ENCODE measurements at regions of chr9 and their contacts with region 1.

Region 1: DNA sequence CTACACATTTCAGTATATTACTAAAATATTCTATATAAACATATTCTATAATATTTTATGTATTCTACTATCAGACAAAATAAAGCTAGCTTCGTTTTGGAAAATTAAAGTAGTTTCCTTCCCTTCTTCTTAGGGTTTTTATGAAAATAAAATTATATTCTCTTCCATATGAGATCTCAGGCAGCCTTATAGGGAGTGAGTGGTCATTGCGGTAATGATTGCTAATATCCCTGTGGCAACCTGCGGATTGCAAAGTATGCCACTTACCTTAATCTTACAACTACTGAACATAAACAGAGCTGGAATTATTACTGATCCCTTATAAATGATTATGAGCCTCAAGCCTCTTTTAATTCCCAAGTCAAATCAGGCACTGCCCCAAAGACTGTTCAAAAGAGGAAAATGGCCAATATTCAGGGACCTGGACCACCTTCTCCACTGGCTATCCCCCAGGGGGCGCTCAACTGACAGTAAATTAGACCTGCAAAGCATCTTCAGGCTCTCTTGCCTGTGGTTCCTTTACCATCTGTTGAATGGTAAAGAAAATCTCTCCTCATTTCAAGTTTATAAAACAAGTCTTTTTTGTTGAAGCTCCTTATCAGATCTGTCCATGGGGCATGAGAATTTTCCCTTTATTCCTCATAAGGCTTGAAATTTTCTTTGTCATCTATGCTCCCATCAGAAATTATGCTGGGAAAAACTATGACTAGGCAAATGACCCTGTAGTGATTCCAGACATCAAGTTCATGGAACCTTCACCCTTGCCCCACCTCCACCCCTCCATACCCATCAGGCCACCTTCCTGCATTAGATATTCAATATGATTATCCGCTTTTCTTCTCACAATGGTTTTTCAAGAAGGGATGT is 163.9 kb downstream of the CEMIP2 start:
- DNase-seq: peak; percentile 65
- H3K4me3 Mint-ChIP-seq: no peak overlapping the region
- H3K27ac Mint-ChIP-seq: no peak overlapping the region
- H3K4me1 Mint-ChIP-seq: no peaks in the 10 kb centered on the region
- H3K27me3 Mint-ChIP-seq: peaks cover 9% of the 10 kb centered on the region

Region 2: GRCh38 chr9:71243951-71244350 is 360.5 kb before region 1 on chr9:
- intact Hi-C with region 1: no loop called
- DNase-seq: no peak
- H3K4me3 Mint-ChIP-seq: no peak overlapping the region
- H3K27ac Mint-ChIP-seq: no peak overlapping the region
- H3K4me1 Mint-ChIP-seq: no peaks in the 10 kb centered on the region
- H3K27me3 Mint-ChIP-seq: no peaks in the 10 kb centered on the region

Region 3: GRCh38 chr9:71285191-71285656 is 319.2 kb before region 1 on chr9:
- intact Hi-C with region 1: loop called (anchors 5 kb)
- DNase-seq: peak; percentile 10
- H3K4me3 Mint-ChIP-seq: no peak overlapping the region
- H3K27ac Mint-ChIP-seq: no peak overlapping the region
- H3K4me1 Mint-ChIP-seq: no peaks in the 10 kb centered on the region
- H3K27me3 Mint-ChIP-seq: peaks cover 3% of the 10 kb centered on the region

Region 4: DNA sequence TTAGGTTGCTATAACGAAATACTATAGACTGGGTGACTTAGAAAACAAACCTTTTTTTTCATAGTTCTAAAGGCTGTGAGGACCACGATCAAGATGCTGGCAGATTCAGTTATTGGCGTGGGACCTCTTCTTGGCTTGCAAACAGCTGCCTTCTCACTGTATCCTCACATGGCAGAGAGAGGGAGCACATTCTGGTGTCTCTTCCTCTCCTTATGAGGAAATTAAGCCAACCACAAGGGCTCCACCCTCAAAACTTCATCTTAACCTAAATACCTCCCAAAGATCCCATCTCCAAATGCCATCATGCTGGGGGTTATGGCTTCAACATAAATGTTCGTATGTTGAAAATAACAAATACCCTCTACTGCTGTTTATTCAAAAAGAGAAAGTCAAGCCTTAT is 33.2 kb before region 1 on chr9:
- intact Hi-C with region 1: no loop called
- DNase-seq: no peak
- H3K4me3 Mint-ChIP-seq: no peak overlapping the region
- H3K27ac Mint-ChIP-seq: no peak overlapping the region
- H3K4me1 Mint-ChIP-seq: no peaks in the 10 kb centered on the region
- H3K27me3 Mint-ChIP-seq: peaks cover 15% of the 10 kb centered on the region

Region 5: GRCh38 chr9:71647094-71647591 is 42.7 kb after region 1 on chr9:
- intact Hi-C with region 1: no loop called
- DNase-seq: peak; percentile 21
- H3K4me3 Mint-ChIP-seq: peak overlapping the region; percentile 73
- H3K27ac Mint-ChIP-seq: no peak overlapping the region
- H3K4me1 Mint-ChIP-seq: peaks cover 66% of the 10 kb centered on the region
- H3K27me3 Mint-ChIP-seq: peaks cover 4% of the 10 kb centered on the region

Region 6: GRCh38 chr9:71683598-71684235 is 79.3 kb after region 1 on chr9:
- intact Hi-C with region 1: loop called (anchors 1 kb)
- DNase-seq: no peak
- H3K4me3 Mint-ChIP-seq: peak overlapping the region; percentile 72
- H3K27ac Mint-ChIP-seq: peak overlapping the region; percentile 68
- H3K4me1 Mint-ChIP-seq: peaks cover 60% of the 10 kb centered on the region
- H3K27me3 Mint-ChIP-seq: no peaks in the 10 kb centered on the region

Region 7: DNA sequence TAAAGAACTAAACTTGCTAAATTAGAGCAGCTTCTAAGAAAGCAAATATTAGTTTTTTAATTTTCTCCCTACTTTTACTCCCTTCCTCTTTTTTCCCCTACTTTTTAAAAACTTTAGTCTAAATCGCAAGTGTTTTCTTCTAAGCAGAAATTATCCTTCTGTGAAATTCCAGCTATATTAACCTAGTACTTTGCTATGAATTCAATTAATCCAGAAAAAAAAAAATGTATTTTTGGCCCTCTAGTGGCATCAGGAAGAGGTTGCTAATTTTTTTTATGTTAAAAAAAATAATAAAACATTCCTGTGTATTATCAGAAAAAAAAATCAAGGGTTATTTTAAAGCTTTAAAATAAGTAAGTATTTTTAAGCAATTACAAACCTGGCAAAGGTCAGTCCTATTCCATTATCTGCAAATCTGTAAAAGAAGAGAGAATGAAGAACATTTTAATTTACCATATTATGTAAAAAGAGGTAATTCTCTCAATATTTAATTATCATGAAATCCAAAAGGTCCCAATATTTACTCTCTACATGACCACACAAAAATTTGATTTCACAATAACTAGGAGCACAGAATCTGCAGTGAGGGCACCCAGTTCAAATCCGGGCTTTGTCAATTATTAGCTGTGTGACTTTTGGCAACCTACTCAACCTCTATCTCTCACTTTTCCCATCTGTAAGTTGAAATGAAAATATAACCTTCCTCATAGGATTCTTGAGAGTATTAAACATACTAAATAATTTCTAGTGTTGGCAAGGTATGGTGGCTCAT is 111.9 kb after region 1 on chr9:
- intact Hi-C with region 1: loop called (anchors 1 kb)
- DNase-seq: no peak
- H3K4me3 Mint-ChIP-seq: no peak overlapping the region
- H3K27ac Mint-ChIP-seq: no peak overlapping the region
- H3K4me1 Mint-ChIP-seq: peaks cover 5% of the 10 kb centered on the region
- H3K27me3 Mint-ChIP-seq: no peaks in the 10 kb centered on the region

Region 8: GRCh38 chr9:71819115-71819739 is 214.8 kb after region 1 on chr9:
- intact Hi-C with region 1: loop called (anchors 1 kb)
- DNase-seq: no peak
- H3K4me3 Mint-ChIP-seq: no peak overlapping the region
- H3K27ac Mint-ChIP-seq: no peak overlapping the region
- H3K4me1 Mint-ChIP-seq: peaks cover 17% of the 10 kb centered on the region
- H3K27me3 Mint-ChIP-seq: peaks cover 2% of the 10 kb centered on the region

Region 9: DNA sequence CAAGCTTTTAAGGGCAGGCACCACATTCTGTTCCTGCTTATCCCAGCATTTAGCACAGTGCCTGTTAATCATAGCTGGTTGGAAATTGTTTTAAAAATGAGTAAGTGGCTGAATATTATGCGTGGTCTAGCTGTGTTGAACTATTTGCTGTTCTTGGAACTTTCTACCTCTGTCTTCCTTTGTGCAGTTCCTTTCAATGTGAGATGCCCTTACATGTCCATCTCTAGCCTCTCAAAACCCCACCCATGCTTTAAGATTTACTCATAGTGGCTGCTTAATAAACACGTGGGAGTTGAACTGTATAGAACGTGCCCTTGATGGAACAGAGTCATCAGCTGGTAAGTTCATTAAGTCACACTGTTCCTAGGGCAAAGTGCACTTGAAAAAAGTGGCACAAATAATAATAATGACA is 421.5 kb after region 1 on chr9:
- intact Hi-C with region 1: loop called (anchors 2 kb)
- DNase-seq: no peak
- H3K4me3 Mint-ChIP-seq: no peak overlapping the region
- H3K27ac Mint-ChIP-seq: no peak overlapping the region
- H3K4me1 Mint-ChIP-seq: peaks cover 5% of the 10 kb centered on the region
- H3K27me3 Mint-ChIP-seq: no peaks in the 10 kb centered on the region

Measured in activated T-helper 1 cell treated with anti-CD3 and anti-CD28 coated beads, Interleukin-12 subunit alpha, Interleukin-12 subunit beta, Interleukin-2, Interleukin-4 antibody, amounts not matched to agents 30 ng/mL and 10 ng/mL and 1 ng/mL, durations not matched to agents 14 hours and 24 hours and 36 hours (primary cell).